MCF 10A (cell line): ENCODE measurements at regions of chr1 and their contacts with region 1.

Region 1: DNA sequence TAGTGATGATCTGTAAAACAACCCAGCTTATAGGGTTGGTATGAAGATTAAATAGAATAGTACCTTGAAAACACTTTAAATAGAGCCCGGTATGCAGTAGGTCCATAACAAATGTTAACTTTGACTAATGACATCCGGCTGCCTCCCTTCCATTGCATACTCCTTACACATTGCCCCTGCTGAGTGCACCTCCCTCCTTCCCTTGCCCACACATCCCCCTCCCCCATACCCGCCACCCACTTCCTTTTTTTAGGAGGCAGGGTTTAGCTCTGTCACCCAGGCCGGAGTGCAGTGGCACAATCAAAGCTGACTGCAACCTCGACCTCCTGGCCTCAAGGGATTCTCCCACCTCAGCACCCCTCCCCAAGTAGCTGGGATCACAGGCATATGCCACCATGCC is 24.4 kb upstream of the ZC3H12A start:
- DNase-seq: no peak
- H3K4me3 Mint-ChIP-seq: no peak overlapping the region
- H3K27ac Mint-ChIP-seq: peak overlapping the region; percentile 54
- H3K4me1 Mint-ChIP-seq: peaks cover 12% of the 10 kb centered on the region
- H3K27me3 Mint-ChIP-seq: no peaks in the 10 kb centered on the region
- CTCF ChIP-seq: no peak

Region 2: DNA sequence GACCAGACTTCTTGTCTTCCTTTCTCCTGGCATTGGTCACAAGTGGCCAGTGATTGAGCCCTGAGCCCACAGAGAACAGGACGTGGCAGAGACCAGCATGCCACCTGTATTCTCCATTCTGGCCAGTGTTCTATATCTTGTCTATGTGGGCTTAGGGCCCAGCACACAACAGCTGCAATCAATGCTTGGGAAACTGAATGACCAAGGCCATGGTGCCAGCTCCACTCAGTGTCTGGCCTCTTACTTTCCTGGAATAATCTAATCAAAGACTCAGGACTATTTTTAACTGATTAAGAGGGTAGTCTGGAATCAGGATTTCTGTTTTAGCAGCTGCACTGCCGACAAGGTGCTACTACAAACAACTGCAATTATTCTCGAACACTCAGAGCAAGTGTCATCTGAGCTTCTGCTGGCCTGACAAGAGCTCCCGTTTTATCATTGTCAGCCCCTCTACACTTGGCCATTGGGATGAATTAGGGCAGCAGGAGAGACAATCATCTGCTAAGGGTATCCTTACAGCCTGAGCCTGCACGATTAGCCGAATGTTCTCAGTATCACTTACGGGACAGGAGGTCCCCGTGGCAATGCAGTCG is 341.2 kb before region 1 on chr1:
- CTCF ChIA-PET with region 1: no interaction called
- POLR2A ChIA-PET with region 1: no interaction called
- intact Hi-C with region 1: no loop called
- DNase-seq: no peak
- H3K4me3 Mint-ChIP-seq: no peak overlapping the region
- H3K27ac Mint-ChIP-seq: no peak overlapping the region
- H3K4me1 Mint-ChIP-seq: no peaks in the 10 kb centered on the region
- H3K27me3 Mint-ChIP-seq: no peaks in the 10 kb centered on the region
- CTCF ChIP-seq: no peak

Region 3: DNA sequence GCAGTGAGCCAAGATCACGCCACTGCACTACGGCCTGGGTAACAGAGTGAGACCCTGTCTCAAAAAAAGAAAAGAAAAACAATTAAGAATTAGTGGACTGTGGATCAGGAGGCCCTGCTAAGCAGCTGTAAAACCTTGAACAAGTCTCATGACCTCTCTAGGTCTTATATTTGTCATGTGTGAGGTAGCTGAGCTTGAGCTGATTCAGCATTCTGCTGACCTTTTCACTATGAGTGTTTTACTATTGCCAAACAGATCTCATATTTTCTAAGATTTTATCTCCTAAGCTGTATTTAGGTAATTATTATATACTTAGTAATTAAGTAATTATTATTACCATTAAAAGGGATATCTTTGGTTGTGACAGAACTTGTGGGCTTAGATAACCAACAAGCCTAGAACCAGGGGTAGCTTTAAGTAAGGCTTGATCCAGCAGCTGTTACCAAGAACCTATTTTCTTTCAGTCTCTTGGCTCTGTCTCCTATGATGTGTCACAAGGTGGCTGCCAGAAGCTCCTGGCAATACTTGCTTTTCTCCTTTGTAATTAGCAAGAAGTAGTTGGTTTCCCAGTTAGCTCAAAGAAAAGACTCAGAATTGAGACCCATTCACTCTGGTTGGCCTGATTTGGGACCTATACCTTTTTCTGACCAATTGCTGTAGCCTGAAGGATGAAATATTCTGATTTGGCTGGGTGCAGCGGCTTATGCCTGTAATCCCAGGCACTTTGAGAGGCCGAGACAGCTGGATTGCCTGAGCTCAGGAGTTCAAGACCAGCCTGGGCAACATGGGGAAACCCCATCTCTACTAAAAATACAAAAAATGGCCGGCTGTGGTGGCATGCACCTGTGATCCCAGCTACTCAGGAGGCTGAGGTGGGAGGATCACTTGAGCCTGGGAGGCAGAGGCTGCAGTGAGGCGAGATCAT is 15.9 kb after region 1 on chr1:
- CTCF ChIA-PET with region 1: interaction called, 75 read pairs
- POLR2A ChIA-PET with region 1: interaction called, 3 read pairs
- intact Hi-C with region 1: no loop called
- DNase-seq: peak; percentile 35
- H3K4me3 Mint-ChIP-seq: no peak overlapping the region
- H3K27ac Mint-ChIP-seq: no peak overlapping the region
- H3K4me1 Mint-ChIP-seq: peaks cover 4% of the 10 kb centered on the region
- H3K27me3 Mint-ChIP-seq: no peaks in the 10 kb centered on the region
- CTCF ChIP-seq: no peak

Region 4: DNA sequence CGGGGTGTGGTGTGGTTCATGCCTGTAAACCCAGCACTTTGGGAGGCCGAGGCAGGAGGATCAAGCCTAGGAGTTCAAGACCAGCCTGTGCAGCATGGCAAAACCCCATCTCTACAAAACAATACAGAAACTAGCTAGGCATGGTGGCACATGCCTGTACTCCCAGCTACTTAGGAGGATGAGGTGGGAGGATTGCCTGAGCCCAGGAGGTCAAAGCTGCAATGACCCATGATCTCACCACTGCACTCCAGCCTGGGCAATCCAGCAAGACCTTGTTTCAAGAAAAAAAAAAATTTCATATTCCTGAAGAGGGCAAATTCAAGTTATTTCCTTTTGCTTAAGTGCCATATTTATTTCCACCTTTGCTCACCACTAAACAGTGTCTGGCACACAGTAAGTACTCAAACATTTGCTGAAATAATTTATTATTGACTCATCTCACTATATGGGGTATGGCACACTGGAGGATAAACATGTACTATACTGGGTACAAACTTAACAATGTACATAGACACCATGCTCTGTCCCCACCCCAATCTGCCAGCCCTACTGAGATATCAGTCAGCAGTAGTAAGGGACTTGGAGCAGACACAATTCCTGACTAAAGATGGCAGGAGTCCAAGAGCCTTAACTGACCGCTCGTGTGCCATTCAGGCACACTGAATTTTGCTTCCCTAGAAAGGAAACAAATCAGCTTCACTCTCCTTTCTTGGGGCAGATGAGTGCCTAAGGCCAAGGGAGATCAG is 49.1 kb after region 1 on chr1:
- CTCF ChIA-PET with region 1: interaction called, 234 read pairs
- POLR2A ChIA-PET with region 1: no interaction called
- intact Hi-C with region 1: no loop called
- DNase-seq: peak; percentile 70
- H3K4me3 Mint-ChIP-seq: no peak overlapping the region
- H3K27ac Mint-ChIP-seq: peak overlapping the region; percentile 59
- H3K4me1 Mint-ChIP-seq: peaks cover 7% of the 10 kb centered on the region
- H3K27me3 Mint-ChIP-seq: no peaks in the 10 kb centered on the region
- CTCF ChIP-seq: no peak